Endothelial cell of umbilical vein (primary cell): ENCODE measurements at regions of chr6 and their contacts with region 1.

Region 1: DNA sequence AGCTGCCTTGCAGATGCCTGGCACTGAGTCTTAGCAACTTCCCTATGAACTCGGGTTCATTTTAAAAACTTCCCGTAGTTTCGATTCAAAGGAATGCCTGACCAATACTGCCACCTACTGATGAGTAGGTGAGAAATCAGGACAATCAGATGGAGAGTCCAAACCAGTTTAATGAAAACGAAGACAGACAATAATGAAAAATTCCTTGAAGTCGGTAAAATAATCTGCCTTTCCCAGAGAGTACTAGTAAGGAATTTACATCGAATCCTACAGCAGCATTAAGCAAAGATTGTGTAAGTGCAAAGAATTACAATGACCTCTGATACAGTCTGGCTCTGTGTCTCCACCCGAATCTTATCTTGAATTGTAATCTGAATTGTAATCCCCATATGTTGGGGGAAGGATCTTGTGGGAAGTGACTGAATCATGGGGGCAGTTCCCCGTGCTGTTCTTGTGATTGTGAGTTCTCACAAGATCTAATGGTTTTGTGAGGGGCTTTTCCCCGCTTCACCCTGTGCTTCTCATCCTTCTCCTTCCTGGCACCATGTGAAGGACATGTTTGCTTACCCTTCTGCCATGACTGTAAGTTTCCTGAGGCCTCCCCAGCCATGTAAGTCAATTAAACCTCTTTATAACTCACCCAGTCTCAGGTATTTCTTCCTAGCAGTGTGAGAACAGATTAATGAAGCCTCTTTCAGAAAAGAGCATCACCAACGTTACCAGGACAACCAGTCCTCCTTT is 134.4 kb downstream of the ARHGAP18 start:
- DNase-seq: peak; percentile 72
- H3K4me3 ChIP-seq: peak overlapping the region in 1 of 3 experiments; percentile 19
- H3K27ac ChIP-seq: peak overlapping the region; percentile 80
- H3K4me1 ChIP-seq: peaks cover 32% of the 10 kb centered on the region
- H3K27me3 ChIP-seq: no peaks in the 10 kb centered on the region
- CTCF ChIP-seq: peak; percentile 50 to 54
- POLR2A ChIP-seq: no peak

Region 2: GRCh38 chr6:128336436-128337095 is 1239.0 kb before region 1 on chr6:
- CTCF ChIA-PET with region 1: no interaction called
- POLR2A ChIA-PET with region 1: no interaction called
- dilution Hi-C with region 1: no loop called
- intact Hi-C with region 1: no loop called
- DNase-seq: no peak
- H3K4me3 ChIP-seq: no peak overlapping the region
- H3K27ac ChIP-seq: no peak overlapping the region
- H3K4me1 ChIP-seq: no peaks in the 10 kb centered on the region
- H3K27me3 ChIP-seq: no peaks in the 10 kb centered on the region
- CTCF ChIP-seq: no peak
- POLR2A ChIP-seq: no peak

Region 3: DNA sequence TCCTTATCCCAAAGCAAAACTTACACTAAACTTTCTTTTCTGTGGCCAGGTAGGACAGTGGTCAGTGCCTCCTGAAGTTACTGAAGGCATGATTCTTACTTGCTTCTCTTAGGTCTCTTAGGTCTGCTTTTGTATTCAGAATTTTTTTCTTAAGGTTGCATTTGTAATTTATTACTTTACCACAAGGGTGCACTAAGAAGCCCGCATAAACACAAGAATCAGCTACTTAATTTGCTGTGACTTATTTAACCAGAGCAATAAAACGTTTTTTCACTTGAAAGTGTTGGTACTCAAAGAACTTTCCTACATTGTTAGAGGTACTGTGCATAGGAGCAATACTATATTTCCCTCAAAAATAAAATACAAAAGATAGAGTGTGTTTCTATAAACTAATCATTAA is 768.0 kb before region 1 on chr6:
- CTCF ChIA-PET with region 1: no interaction called
- POLR2A ChIA-PET with region 1: no interaction called
- dilution Hi-C with region 1: no loop called
- intact Hi-C with region 1: loop called (anchors 5 kb)
- DNase-seq: peak; percentile 62
- H3K4me3 ChIP-seq: no peak overlapping the region
- H3K27ac ChIP-seq: no peak overlapping the region
- H3K4me1 ChIP-seq: peaks cover 10% of the 10 kb centered on the region
- H3K27me3 ChIP-seq: peaks cover 7 to 11% of the 10 kb centered on the region in 2 experiments
- CTCF ChIP-seq: peak; percentile 19 to 35
- POLR2A ChIP-seq: no peak